ENCODE measurements at regions of chr1 and their contacts with region 1.

Region 1: DNA sequence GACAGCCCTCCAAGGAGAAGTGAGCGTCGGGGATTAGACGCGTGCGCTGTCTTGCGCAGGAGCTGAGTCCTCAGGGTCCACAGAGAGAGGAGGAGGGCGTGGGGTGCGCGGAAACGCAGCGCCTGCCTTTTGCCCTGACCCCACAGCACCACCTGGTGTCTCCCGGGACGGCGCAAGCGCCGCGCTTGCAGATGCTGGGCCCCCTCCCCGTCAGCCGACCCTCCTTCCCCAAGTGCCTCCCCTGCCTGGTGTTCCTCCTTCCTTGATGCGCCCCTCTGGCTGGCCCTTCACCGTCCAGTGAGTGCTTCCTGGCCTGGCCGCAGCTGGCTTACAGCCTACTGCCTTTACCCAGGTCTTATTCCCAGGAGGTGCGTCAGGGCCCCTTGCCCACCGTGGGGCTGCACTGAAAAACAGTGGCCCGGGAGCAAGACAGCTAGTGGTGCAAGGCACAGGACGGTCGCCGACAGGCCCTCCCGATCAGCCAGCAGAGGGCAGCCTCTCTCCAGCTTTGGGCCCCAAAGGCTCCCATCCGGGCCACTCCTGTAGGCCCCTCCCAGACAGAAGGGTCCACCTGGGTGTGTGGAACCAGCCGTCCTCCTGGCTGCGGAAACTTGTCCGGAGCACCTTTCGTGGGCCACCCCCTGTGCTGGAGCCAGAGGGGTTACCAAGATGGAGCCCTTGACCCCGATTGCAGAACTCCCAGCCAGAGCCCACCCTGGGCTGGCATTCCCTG is 12.9 kb upstream of the PHLDA3 start:
- DNase-seq: peak; percentile 65 to 85 (median 81)
- ATAC-seq: peak; percentile 86
- H3K4me3 ChIP-seq: peak overlapping the region; percentile 24 to 34
- H3K4me3 Mint-ChIP-seq: peak overlapping the region; percentile 69
- H3K27ac ChIP-seq: no peak overlapping the region
- H3K27ac Mint-ChIP-seq: no peak overlapping the region
- H3K4me1 ChIP-seq: peaks cover 19% of the 10 kb centered on the region
- H3K4me1 Mint-ChIP-seq: peaks cover 19% of the 10 kb centered on the region
- H3K27me3 ChIP-seq: peaks cover 10 to 15% of the 10 kb centered on the region in 2 experiments
- H3K27me3 Mint-ChIP-seq: peaks cover 23% of the 10 kb centered on the region
- CTCF ChIP-seq: peak; percentile 66

Region 2: DNA sequence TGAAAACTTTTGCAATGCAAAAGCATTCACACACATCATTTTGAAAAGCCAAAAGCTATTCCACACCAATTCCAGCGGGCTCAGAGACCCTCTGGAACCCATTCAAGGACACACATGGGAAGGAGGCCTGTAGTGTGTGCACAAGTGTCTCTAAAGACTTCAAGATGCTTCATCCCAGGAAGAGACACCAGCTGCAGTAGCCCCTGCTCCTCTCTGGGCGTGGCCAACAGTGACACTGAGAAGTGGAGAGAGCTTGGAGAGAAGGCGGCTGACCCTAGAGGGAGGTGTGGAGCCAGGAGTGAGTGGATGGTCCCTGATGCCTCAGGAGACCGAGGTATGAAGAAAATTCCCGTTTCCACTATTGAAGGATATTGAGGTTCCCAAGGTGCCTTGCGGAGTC is 45.5 kb before region 1 on chr1:
- CTCF ChIA-PET with region 1: interaction called, 12 read pairs
- POLR2A ChIA-PET with region 1: no interaction called
- intact Hi-C with region 1: no loop called
- DNase-seq: no peak
- ATAC-seq: no peak
- H3K4me3 ChIP-seq: no peak overlapping the region
- H3K4me3 Mint-ChIP-seq: no peak overlapping the region
- H3K27ac ChIP-seq: no peak overlapping the region
- H3K27ac Mint-ChIP-seq: no peak overlapping the region
- H3K4me1 ChIP-seq: no peaks in the 10 kb centered on the region
- H3K4me1 Mint-ChIP-seq: peaks cover 5% of the 10 kb centered on the region
- H3K27me3 ChIP-seq: no peaks in the 10 kb centered on the region
- H3K27me3 Mint-ChIP-seq: peaks cover 17% of the 10 kb centered on the region
- CTCF ChIP-seq: no peak

Region 3: DNA sequence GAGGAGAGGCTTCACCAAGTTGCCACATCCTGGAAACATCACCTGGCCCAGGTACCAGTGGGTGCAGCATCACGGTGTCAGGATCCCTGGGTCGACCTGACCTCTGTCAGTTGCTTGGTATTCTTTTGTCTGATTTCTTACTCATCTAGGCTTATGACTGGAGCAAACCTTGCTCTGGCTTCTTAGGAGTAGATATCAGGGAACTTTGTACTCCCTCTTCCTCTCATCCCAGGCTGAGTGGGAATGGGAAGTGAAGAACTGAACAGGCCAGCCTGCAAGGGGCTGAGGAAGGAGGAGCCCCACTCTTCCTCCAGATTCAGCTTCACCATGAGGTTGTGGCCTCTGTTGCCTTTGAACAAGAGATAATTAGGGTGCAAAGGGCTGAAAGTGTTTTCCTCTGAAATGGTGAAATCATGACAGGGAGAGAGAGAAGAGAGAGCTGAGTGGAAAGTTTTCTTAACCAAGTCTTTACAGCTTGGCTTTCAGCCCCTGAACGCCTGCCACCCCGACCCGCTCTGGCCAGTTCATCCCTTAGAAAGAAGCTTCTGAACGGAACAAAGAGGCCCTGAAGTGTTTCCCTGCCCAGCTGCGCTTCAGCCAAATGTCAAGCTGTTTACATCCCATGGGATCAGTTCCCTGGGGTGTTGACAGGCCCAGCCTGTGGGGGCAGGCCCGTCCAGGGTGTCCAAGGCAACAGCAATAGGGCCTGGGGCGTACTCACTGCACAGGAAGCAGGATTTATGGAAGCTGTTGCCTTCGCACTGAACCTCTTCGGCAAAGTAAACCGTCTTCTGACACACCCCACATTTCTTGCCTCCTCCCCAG is 13.8 kb after region 1 on chr1:
- CTCF ChIA-PET with region 1: interaction called, 577 read pairs
- POLR2A ChIA-PET with region 1: no interaction called
- intact Hi-C with region 1: no loop called
- DNase-seq: no peak
- ATAC-seq: no peak
- H3K4me3 ChIP-seq: no peak overlapping the region
- H3K4me3 Mint-ChIP-seq: no peak overlapping the region
- H3K27ac ChIP-seq: no peak overlapping the region
- H3K27ac Mint-ChIP-seq: no peak overlapping the region
- H3K4me1 ChIP-seq: no peaks in the 10 kb centered on the region
- H3K4me1 Mint-ChIP-seq: no peaks in the 10 kb centered on the region
- H3K27me3 ChIP-seq: no peaks in the 10 kb centered on the region
- H3K27me3 Mint-ChIP-seq: no peaks in the 10 kb centered on the region
- CTCF ChIP-seq: no peak

Region 4: GRCh38 chr1:201511941-201512539 is 30.1 kb after region 1 on chr1:
- CTCF ChIA-PET with region 1: interaction called, 577 read pairs
- POLR2A ChIA-PET with region 1: interaction called, 19 read pairs
- intact Hi-C with region 1: loop called (anchors 1 kb)
- DNase-seq: no peak
- ATAC-seq: no peak
- H3K4me3 ChIP-seq: no peak overlapping the region
- H3K4me3 Mint-ChIP-seq: no peak overlapping the region
- H3K27ac ChIP-seq: no peak overlapping the region
- H3K27ac Mint-ChIP-seq: no peak overlapping the region
- H3K4me1 ChIP-seq: peaks cover 8% of the 10 kb centered on the region
- H3K4me1 Mint-ChIP-seq: peaks cover 17% of the 10 kb centered on the region
- H3K27me3 ChIP-seq: no peaks in the 10 kb centered on the region
- H3K27me3 Mint-ChIP-seq: no peaks in the 10 kb centered on the region
- CTCF ChIP-seq: no peak

Region 5: GRCh38 chr1:201792534-201793305 is 310.8 kb after region 1 on chr1:
- CTCF ChIA-PET with region 1: no interaction called
- POLR2A ChIA-PET with region 1: no interaction called
- intact Hi-C with region 1: loop called in 1 of 2 experiments (anchors 5 kb)
- DNase-seq: peak in 8 of 9 experiments; percentile 6 to 62 (median 48)
- ATAC-seq: peak; percentile 46
- H3K4me3 ChIP-seq: no peak overlapping the region
- H3K4me3 Mint-ChIP-seq: no peak overlapping the region
- H3K27ac ChIP-seq: no peak overlapping the region
- H3K27ac Mint-ChIP-seq: no peak overlapping the region
- H3K4me1 ChIP-seq: no peaks in the 10 kb centered on the region
- H3K4me1 Mint-ChIP-seq: no peaks in the 10 kb centered on the region
- H3K27me3 ChIP-seq: no peaks in the 10 kb centered on the region
- H3K27me3 Mint-ChIP-seq: no peaks in the 10 kb centered on the region
- CTCF ChIP-seq: peak; percentile 89

Measured in CD8-positive, alpha-beta T cell (primary cell).